GM12878 (cell line): ENCODE measurements at regions of chr4 and their contacts with region 1.

Region 1: GRCh38 chr4:163544407-163545038 is 50.0 kb downstream of the TMA16 start:
- DNase-seq: no peak
- ATAC-seq: peak; percentile 95
- H3K4me3 ChIP-seq: no peak overlapping the region
- H3K27ac ChIP-seq: no peak overlapping the region
- H3K4me1 ChIP-seq: no peaks in the 10 kb centered on the region
- H3K27me3 ChIP-seq: no peaks in the 10 kb centered on the region
- CTCF ChIP-seq: peak; percentile 92 to 93 (median 92)
- EP300 ChIP-seq: no peak
- POLR2A ChIP-seq: no peak
- RAD21 ChIP-seq: peak; percentile 84

Region 2: GRCh38 chr4:163048447-163048846 is 496.1 kb before region 1 on chr4:
- CTCF ChIA-PET with region 1: interaction called, 3 read pairs
- POLR2A ChIA-PET with region 1: no interaction called
- RAD21 ChIA-PET with region 1: interaction called, 3 read pairs
- SMC1A ChIA-PET with region 1: interaction called, 4 read pairs
- in situ Hi-C with region 1: loop called (anchors 10 kb)
- intact Hi-C with region 1: loop called (anchors 2 kb)
- DNase-seq: no peak
- ATAC-seq: peak; percentile 87
- H3K4me3 ChIP-seq: no peak overlapping the region
- H3K27ac ChIP-seq: no peak overlapping the region
- H3K4me1 ChIP-seq: no peaks in the 10 kb centered on the region
- H3K27me3 ChIP-seq: no peaks in the 10 kb centered on the region; a peak in 1 of 4 replicates
- CTCF ChIP-seq: peak; percentile 35 to 57 (median 55); a peak in 4 of 6 replicates
- EP300 ChIP-seq: no peak
- POLR2A ChIP-seq: no peak
- RAD21 ChIP-seq: peak; percentile 64

Region 3: GRCh38 chr4:163395055-163395454 is 149.5 kb before region 1 on chr4:
- CTCF ChIA-PET with region 1: no interaction called
- POLR2A ChIA-PET with region 1: no interaction called
- RAD21 ChIA-PET with region 1: no interaction called
- SMC1A ChIA-PET with region 1: no interaction called
- in situ Hi-C with region 1: no loop called
- intact Hi-C with region 1: loop called (anchors 10 kb)
- DNase-seq: no peak
- ATAC-seq: no peak
- H3K4me3 ChIP-seq: no peak overlapping the region
- H3K27ac ChIP-seq: no peak overlapping the region
- H3K4me1 ChIP-seq: no peaks in the 10 kb centered on the region
- H3K27me3 ChIP-seq: no peaks in the 10 kb centered on the region
- CTCF ChIP-seq: no peak
- EP300 ChIP-seq: no peak
- POLR2A ChIP-seq: no peak
- RAD21 ChIP-seq: no peak

Region 4: GRCh38 chr4:163494360-163495162 is 50.0 kb before region 1 on chr4 and contains the start of gene TMA16:
- CTCF ChIA-PET with region 1: interaction called, 41 read pairs
- POLR2A ChIA-PET with region 1: interaction called, 4 read pairs
- RAD21 ChIA-PET with region 1: interaction called, 19 read pairs
- SMC1A ChIA-PET with region 1: interaction called, 33 read pairs
- in situ Hi-C with region 1: loop called (anchors 10 kb)
- intact Hi-C with region 1: loop called (anchors 2 kb)
- DNase-seq: peak; percentile 77
- ATAC-seq: peak; percentile 86
- H3K4me3 ChIP-seq: peak within 1 kb of the TSS; percentile 85
- H3K27ac ChIP-seq: peak within 1 kb of the TSS; percentile 97
- H3K4me1 ChIP-seq: peaks cover 5% of the 10 kb centered on the region; the same call in 1 of the 2 replicates
- H3K27me3 ChIP-seq: no peaks in the 10 kb centered on the region
- CTCF ChIP-seq: no peak
- EP300 ChIP-seq: peak in 1 of 2 experiments; percentile 27; a peak in 1 of 4 replicates
- POLR2A ChIP-seq: peak; percentile 90
- RAD21 ChIP-seq: no peak
- polyA plus RNA-seq, gene TMA16: 65.4 to 91.0 TPM

Region 5: GRCh38 chr4:163554870-163555465 is 10.4 kb after region 1 on chr4:
- CTCF ChIA-PET with region 1: interaction called, 57 read pairs
- POLR2A ChIA-PET with region 1: no interaction called
- RAD21 ChIA-PET with region 1: interaction called, 12 read pairs
- SMC1A ChIA-PET with region 1: interaction called, 5 read pairs
- in situ Hi-C with region 1: no loop called
- intact Hi-C with region 1: no loop called
- DNase-seq: no peak
- ATAC-seq: no peak
- H3K4me3 ChIP-seq: no peak overlapping the region
- H3K27ac ChIP-seq: no peak overlapping the region
- H3K4me1 ChIP-seq: peaks cover 18% of the 10 kb centered on the region
- H3K27me3 ChIP-seq: no peaks in the 10 kb centered on the region
- CTCF ChIP-seq: peak; percentile 41 to 63 (median 58); a peak in 4 of 6 replicates
- EP300 ChIP-seq: no peak
- POLR2A ChIP-seq: no peak
- RAD21 ChIP-seq: peak; percentile 72

Region 6: GRCh38 chr4:163681208-163681821 is 136.8 kb after region 1 on chr4:
- CTCF ChIA-PET with region 1: interaction called, 571 read pairs
- POLR2A ChIA-PET with region 1: no interaction called
- RAD21 ChIA-PET with region 1: interaction called, 247 read pairs
- SMC1A ChIA-PET with region 1: interaction called, 727 read pairs
- in situ Hi-C with region 1: no loop called
- intact Hi-C with region 1: no loop called
- DNase-seq: no peak
- ATAC-seq: peak; percentile 93
- H3K4me3 ChIP-seq: no peak overlapping the region
- H3K27ac ChIP-seq: no peak overlapping the region
- H3K4me1 ChIP-seq: no peaks in the 10 kb centered on the region
- H3K27me3 ChIP-seq: no peaks in the 10 kb centered on the region
- CTCF ChIP-seq: peak; percentile 58 to 61 (median 60)
- EP300 ChIP-seq: no peak
- POLR2A ChIP-seq: no peak
- RAD21 ChIP-seq: peak; percentile 89

Region 7: GRCh38 chr4:163755013-163755412 is 210.5 kb after region 1 on chr4:
- CTCF ChIA-PET with region 1: interaction called, 393 read pairs
- POLR2A ChIA-PET with region 1: no interaction called
- RAD21 ChIA-PET with region 1: interaction called, 170 read pairs
- SMC1A ChIA-PET with region 1: interaction called, 261 read pairs
- in situ Hi-C with region 1: no loop called
- intact Hi-C with region 1: no loop called
- DNase-seq: peak; percentile 12
- ATAC-seq: peak; percentile 92
- H3K4me3 ChIP-seq: no peak overlapping the region
- H3K27ac ChIP-seq: no peak overlapping the region
- H3K4me1 ChIP-seq: no peaks in the 10 kb centered on the region; the same call in 1 of the 2 replicates
- H3K27me3 ChIP-seq: no peaks in the 10 kb centered on the region
- CTCF ChIP-seq: peak in 2 of 3 experiments; percentile 47 to 65
- EP300 ChIP-seq: no peak
- POLR2A ChIP-seq: no peak
- RAD21 ChIP-seq: peak; percentile 64